ENCODE measurements at regions of chr15 and their contacts with region 1.

Region 1: DNA sequence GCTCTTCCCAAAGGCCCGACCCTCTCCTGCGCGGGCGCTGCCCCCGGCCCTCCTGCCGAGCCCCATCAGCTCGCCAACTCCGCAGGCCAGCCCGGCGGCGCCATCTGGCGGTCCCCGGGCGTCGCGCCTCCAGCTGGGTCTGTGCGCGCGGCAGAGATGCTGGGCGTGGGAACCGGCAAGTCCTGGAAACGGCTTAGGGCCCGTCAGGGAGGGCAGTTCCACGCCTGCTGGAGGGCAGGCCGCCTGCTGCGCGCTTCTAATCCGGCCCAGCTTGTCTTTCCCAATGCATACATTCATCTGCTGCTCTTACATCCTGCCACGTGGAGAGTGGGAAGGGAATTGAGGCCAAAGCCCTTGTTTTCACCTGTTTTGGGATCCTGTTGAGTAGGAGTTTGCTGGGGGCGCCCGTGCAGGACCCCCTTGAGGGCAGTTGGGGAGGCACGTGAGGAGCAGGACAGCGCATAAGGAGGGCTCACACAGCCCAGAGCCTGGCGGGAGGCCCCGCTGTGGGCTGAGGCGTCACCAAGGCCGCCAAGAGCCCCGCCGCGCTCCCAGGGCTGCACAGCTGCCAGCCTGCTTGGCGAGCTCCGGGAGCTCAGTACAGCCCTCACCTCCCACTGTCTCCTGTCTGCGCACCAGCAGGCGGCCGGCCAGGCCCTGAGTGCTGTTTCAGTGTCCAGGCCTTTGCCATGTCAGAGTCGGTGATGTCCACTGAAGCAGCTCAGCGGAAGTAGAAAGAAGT is 165.6 kb downstream of the NSMCE3 start:
- DNase-seq: peak; percentile 62
- ATAC-seq: peak; percentile 85
- H3K4me3 Mint-ChIP-seq: no peak overlapping the region
- H3K27ac Mint-ChIP-seq: peak overlapping the region; percentile 15
- H3K4me1 Mint-ChIP-seq: peaks cover 2% of the 10 kb centered on the region
- H3K27me3 Mint-ChIP-seq: no peaks in the 10 kb centered on the region

Region 2: GRCh38 chr15:29081781-29082180 is 22.2 kb before region 1 on chr15:
- CTCF ChIA-PET with region 1: interaction called, 12 read pairs
- DNase-seq: no peak
- ATAC-seq: no peak
- H3K4me3 Mint-ChIP-seq: no peak overlapping the region
- H3K27ac Mint-ChIP-seq: no peak overlapping the region
- H3K4me1 Mint-ChIP-seq: no peaks in the 10 kb centered on the region
- H3K27me3 Mint-ChIP-seq: no peaks in the 10 kb centered on the region

Region 3: GRCh38 chr15:29252234-29252633 is 148.2 kb after region 1 on chr15:
- CTCF ChIA-PET with region 1: no interaction called
- DNase-seq: no peak
- ATAC-seq: no peak
- H3K4me3 Mint-ChIP-seq: no peak overlapping the region
- H3K27ac Mint-ChIP-seq: no peak overlapping the region
- H3K4me1 Mint-ChIP-seq: no peaks in the 10 kb centered on the region
- H3K27me3 Mint-ChIP-seq: peaks cover 2% of the 10 kb centered on the region